Heart right ventricle (tissue), 16 donors: ENCODE measurements at regions of chr18 and their contacts with region 1.

Region 1: DNA sequence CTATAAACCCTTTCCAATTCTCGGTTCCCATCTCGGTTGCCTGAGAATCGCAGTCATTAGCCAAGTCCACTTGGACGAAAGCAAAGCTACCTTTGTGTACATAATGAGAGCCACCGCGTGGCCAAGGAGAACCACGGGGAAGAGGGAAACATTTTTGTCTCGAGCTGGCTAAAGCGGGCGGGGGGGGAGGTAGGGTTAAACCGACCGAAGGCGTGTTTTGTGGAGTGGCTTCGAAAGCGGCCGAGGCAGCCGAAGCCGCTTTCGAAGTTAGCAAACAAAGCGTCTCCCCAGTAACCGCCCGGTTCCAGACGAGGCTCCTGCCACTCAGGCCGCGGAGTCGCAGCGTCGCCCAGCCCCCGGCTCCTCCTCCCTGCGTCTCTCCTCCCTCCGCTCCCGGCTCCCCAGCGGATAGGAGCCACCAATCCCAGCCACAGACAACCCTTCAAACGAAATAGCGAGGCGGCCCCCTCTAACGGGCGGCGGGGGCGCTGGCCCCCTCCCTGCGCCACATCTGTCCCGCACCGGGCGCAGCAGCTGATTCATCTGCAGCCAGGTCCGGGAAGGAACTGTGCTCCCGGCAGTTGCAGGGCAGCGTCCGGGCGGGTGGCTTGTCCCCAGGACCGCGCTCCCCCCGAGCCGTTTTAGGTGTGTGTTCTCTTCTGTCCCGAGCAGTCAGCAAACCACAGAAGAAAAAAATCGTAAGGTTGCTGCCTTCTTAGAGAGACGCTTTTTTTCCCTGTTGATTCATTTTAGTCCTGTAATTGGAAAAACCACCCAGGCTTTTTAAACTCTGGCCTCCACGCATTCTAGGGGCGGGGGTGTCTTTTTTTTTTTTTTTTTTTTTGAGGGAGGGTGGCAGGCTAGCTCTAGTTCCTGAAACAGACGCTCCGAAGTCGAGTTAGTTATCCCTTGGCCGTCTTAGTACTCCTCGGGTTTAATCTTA is 1.8 kb upstream of the TGIF1 start:
- DNase-seq: peak; percentile 94 to 96
- ATAC-seq: peak; percentile 79 to 91 (median 86)
- H3K4me3 ChIP-seq: peak overlapping the region; percentile 62 to 97 (median 81)
- H3K27ac ChIP-seq: peak overlapping the region; percentile 87 to 100 (median 97)
- H3K4me1 ChIP-seq: peaks cover 0 to 29% (median 17%) of the 10 kb centered on the region in 9 donors
- H3K27me3 ChIP-seq: no peaks in the 10 kb centered on the region
- CTCF ChIP-seq: peak in 3 of 9 donors; percentile 3 to 22 (median 6)

Region 2: GRCh38 chr18:3261371-3262246 is 186.6 kb before region 1 on chr18 and contains the start of gene MYL12B:
- intact Hi-C with region 1: loop called in 3 of 10 experiments (anchors 5 kb)
- DNase-seq: peak; percentile 82 to 85
- ATAC-seq: peak; percentile 67 to 93 (median 82)
- H3K4me3 ChIP-seq: peak within 1 kb of the TSS; percentile 73 to 96 (median 87)
- H3K27ac ChIP-seq: peak within 1 kb of the TSS; percentile 96 to 100 (median 98)
- H3K4me1 ChIP-seq: peaks cover 4 to 80% (median 57%) of the 10 kb centered on the region in 9 donors
- H3K27me3 ChIP-seq: no peaks in the 10 kb centered on the region
- CTCF ChIP-seq: peak in 3 of 9 donors; percentile 8 to 24 (median 24)
- total RNA-seq, gene MYL12B: 153 to 241 (median 190) TPM

Region 3: DNA sequence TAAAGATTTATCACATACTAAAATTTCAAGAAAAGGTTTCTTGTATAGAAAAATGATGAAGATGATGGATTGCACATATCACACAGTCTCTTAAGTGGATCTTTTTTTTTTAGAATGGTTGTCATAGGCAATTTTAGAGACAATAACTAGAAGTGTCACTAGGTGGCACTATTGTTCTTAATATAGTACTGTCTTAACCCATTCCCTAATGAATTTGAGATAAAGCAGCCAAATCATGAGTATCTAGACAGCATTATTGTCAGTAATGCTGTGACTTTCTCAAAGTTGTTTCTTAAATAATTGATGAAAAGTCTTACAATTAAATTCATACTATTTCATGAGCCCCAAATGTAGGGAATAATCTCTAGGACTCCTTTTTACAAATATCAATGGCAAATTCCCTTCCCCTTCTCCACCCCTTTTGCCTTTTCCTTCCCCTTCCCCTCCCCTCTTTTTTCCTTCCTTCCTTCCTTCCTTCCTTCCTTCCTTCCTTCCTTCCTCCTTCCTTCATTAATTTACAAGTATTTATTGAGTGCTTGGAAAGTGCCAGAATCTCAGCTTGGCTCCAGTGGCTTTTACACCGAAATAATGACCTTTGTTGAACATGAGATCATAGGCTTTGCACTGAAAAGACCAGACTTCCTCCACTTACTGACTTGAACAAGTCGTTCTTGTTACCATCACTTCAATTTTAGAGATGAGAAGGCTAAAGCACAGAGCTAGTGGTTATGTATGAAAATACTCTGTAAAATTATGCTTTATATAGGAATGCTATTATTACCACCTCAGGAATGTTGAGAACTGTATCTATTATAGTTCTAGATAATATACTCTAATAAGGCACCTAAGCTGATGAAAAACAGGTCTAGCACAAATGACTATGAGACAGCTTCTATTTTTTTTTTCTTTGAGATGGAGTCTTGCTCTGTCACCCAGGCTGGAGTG is 166.4 kb before region 1 on chr18:
- intact Hi-C with region 1: loop called in 6 of 10 experiments (anchors 2 to 10 kb)
- DNase-seq: peak in 1 of 2 donors; percentile 33
- ATAC-seq: peak; percentile 78 to 89 (median 86)
- H3K4me3 ChIP-seq: no peak overlapping the region
- H3K27ac ChIP-seq: peak overlapping the region in 6 of 10 donors; percentile 1 to 56 (median 32)
- H3K4me1 ChIP-seq: peaks cover 0 to 27% (median 14%) of the 10 kb centered on the region in 9 donors
- H3K27me3 ChIP-seq: no peaks in the 10 kb centered on the region
- CTCF ChIP-seq: peak; percentile 39 to 87 (median 73)

Region 4: GRCh38 chr18:3511922-3512372 is 63.8 kb after region 1 on chr18:
- intact Hi-C with region 1: loop called in 1 of 10 experiments (anchors 10 kb)
- DNase-seq: no peak
- ATAC-seq: peak in 1 of 8 donors; percentile 15
- H3K4me3 ChIP-seq: no peak overlapping the region
- H3K27ac ChIP-seq: no peak overlapping the region
- H3K4me1 ChIP-seq: peaks cover 0 to 9% (median 0%) of the 10 kb centered on the region in 9 donors
- H3K27me3 ChIP-seq: no peaks in the 10 kb centered on the region
- CTCF ChIP-seq: no peak

Region 5: GRCh38 chr18:3585656-3586509 is 137.7 kb after region 1 on chr18:
- intact Hi-C with region 1: loop called in 2 of 10 experiments (anchors 5 to 10 kb)
- DNase-seq: peak; percentile 67 to 73
- ATAC-seq: peak; percentile 75 to 93 (median 86)
- H3K4me3 ChIP-seq: no peak overlapping the region
- H3K27ac ChIP-seq: peak overlapping the region in 1 of 10 donors; percentile 3
- H3K4me1 ChIP-seq: peaks cover 0 to 11% (median 0%) of the 10 kb centered on the region in 9 donors
- H3K27me3 ChIP-seq: no peaks in the 10 kb centered on the region
- CTCF ChIP-seq: peak; percentile 37 to 82 (median 74)

Region 6: DNA sequence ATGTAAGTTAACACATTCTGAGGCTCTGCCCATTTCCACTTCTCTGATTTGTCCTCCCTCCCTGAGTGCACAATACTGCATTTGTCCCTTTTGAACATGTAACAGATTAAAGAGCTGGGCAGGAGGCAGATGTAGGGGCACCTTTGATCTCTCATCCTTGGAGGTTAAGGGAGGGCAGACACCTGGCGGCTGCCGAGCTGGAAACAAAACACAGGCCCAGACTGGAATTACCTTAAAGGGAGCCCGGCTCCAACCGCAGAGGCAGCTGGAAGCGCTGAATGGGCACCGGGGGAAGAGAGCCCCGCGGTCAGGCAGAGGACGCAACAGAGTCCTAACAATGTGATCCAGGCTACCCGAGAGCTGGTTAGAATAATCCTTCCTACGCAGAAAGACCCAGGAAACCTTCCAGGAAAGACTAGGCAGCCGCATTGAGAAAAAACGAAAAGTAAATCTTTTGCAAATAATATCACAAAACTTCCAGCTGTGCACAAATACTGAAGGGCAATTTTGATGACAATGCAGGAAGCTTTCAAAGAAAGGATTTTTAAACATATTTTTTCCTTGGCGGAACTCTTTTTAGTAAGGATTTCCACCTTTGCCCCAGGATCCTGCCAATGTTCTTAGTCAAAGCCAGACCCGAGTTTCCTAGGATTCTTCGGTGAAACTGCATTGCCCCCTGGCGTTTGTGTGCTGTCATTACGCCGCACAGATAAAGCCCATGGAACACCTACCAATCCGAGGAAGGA is 217.8 kb after region 1 on chr18:
- intact Hi-C with region 1: loop called in 6 of 10 experiments (anchors 5 to 10 kb)
- DNase-seq: peak; percentile 77 to 86
- ATAC-seq: peak; percentile 88 to 97 (median 94)
- H3K4me3 ChIP-seq: peak overlapping the region in 8 of 10 donors; percentile 10 to 41 (median 38)
- H3K27ac ChIP-seq: peak overlapping the region in 9 of 10 donors; percentile 41 to 83 (median 69)
- H3K4me1 ChIP-seq: peaks cover 0 to 34% (median 8%) of the 10 kb centered on the region in 9 donors
- H3K27me3 ChIP-seq: no peaks in the 10 kb centered on the region
- CTCF ChIP-seq: peak; percentile 86 to 95 (median 94)